WTC11 (cell line): ENCODE measurements at regions of chr16 and their contacts with region 1.

Region 1: GRCh38 chr16:81204798-81205680 is 33.5 kb upstream of the BCO1 start:
- DNase-seq: no peak
- ATAC-seq: no peak; the same call in 1 of the 2 replicates
- H3K4me3 Mint-ChIP-seq: no peak overlapping the region
- H3K27ac Mint-ChIP-seq: no peak overlapping the region
- H3K4me1 Mint-ChIP-seq: no peaks in the 10 kb centered on the region
- H3K27me3 Mint-ChIP-seq: no peaks in the 10 kb centered on the region
- CTCF ChIP-seq: peak; percentile 41

Region 2: GRCh38 chr16:81163671-81164070 is 41.4 kb before region 1 on chr16:
- CTCF ChIA-PET with region 1: no interaction called
- POLR2A ChIA-PET with region 1: no interaction called
- DNase-seq: no peak
- ATAC-seq: no peak
- H3K4me3 Mint-ChIP-seq: no peak overlapping the region
- H3K27ac Mint-ChIP-seq: no peak overlapping the region
- H3K4me1 Mint-ChIP-seq: no peaks in the 10 kb centered on the region
- H3K27me3 Mint-ChIP-seq: no peaks in the 10 kb centered on the region
- CTCF ChIP-seq: no peak

Region 3: DNA sequence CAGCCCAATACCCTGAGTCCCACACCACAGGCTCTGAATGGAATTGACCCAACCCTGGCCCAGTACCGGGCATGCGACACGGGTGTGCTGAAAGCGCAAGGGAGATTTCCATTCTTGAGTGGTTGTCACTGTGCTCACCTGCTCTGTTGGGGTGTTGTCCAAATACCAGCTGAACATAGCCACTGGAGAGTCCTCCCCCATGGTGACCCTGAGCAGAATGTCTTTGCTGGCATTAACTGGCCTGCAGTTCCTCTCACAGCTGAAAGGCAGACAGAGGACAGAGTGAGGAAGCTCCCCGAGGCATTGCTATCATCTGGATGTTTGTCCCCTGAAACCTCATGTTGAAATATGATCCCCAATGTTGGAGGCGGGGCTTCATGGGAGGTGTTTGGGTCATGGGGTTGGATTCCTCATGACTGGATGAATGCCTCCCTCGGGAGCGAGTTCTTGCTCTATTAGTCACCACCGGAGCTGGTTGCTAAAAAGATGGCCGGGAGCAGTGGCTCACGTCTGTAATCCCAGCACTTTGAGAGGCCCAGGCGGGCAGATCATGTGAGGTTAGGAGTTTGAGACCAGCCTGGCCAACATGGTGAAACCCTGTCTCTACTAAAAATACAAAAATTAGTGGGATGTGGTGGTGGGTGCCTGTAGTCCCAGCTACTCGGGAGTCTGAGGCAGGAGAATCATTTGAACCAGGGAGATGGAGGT is 23.9 kb before region 1 on chr16:
- CTCF ChIA-PET with region 1: interaction called, 17 read pairs
- POLR2A ChIA-PET with region 1: interaction called, 3 read pairs
- DNase-seq: peak; percentile 88
- ATAC-seq: peak; percentile 95
- H3K4me3 Mint-ChIP-seq: peak overlapping the region; percentile 65
- H3K27ac Mint-ChIP-seq: peak overlapping the region; percentile 96
- H3K4me1 Mint-ChIP-seq: peaks cover 20% of the 10 kb centered on the region
- H3K27me3 Mint-ChIP-seq: no peaks in the 10 kb centered on the region
- CTCF ChIP-seq: no peak

Region 4: GRCh38 chr16:81220349-81220748 is 15.3 kb after region 1 on chr16:
- CTCF ChIA-PET with region 1: interaction called, 19 read pairs
- POLR2A ChIA-PET with region 1: no interaction called
- DNase-seq: no peak
- ATAC-seq: no peak
- H3K4me3 Mint-ChIP-seq: no peak overlapping the region
- H3K27ac Mint-ChIP-seq: no peak overlapping the region
- H3K4me1 Mint-ChIP-seq: no peaks in the 10 kb centered on the region
- H3K27me3 Mint-ChIP-seq: no peaks in the 10 kb centered on the region
- CTCF ChIP-seq: no peak

Region 5: GRCh38 chr16:81238296-81239011 is 33.4 kb after region 1 on chr16 and contains the start of gene BCO1:
- CTCF ChIA-PET with region 1: interaction called, 11 read pairs
- POLR2A ChIA-PET with region 1: no interaction called
- DNase-seq: peak; percentile 19
- ATAC-seq: peak; percentile 62
- H3K4me3 Mint-ChIP-seq: peak within 1 kb of the TSS; percentile 65
- H3K27ac Mint-ChIP-seq: peak within 1 kb of the TSS; percentile 98
- H3K4me1 Mint-ChIP-seq: peaks cover 25% of the 10 kb centered on the region
- H3K27me3 Mint-ChIP-seq: no peaks in the 10 kb centered on the region
- CTCF ChIP-seq: no peak
- total RNA-seq, gene BCO1: 0.15 to 0.23 TPM (median 0.23 TPM) in 3 replicates

Region 6: DNA sequence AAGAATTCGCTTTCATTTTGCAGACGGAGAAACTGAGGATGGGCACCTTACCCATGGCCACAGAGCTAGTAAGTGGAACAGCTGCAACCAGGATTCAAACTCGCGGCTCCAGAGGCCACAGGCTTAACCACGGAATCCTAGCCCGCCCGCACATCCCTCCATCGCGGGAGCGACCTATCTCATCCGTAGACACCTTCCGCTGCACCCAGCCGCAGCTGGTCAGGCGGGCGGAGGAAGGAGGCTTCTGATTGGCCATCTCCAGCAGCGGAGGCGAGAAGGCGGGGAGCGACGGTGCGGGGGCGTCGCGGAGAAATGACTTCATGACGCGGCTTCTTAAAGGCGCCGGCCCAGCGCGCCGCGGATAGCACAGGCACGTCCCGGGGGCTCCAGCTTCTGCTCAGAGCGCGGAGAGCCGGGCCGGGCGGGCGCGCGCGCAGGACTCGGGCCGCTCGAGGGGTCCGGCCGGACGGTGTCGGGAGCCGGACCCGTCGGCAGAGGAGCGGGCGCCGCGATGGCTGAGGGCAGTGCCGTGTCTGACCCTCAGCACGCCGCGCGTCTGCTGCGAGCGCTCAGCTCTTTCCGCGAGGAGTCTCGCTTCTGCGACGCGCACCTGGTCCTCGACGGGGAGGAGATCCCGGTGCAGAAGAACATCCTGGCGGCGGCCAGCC is 109.7 kb after region 1 on chr16 and contains the start of gene GAN:
- CTCF ChIA-PET with region 1: interaction called, 10 read pairs
- POLR2A ChIA-PET with region 1: no interaction called
- DNase-seq: peak; percentile 96
- ATAC-seq: peak; percentile 91
- H3K4me3 Mint-ChIP-seq: peak within 1 kb of the TSS; percentile 98
- H3K27ac Mint-ChIP-seq: peak within 1 kb of the TSS; percentile 96
- H3K4me1 Mint-ChIP-seq: peaks cover 41% of the 10 kb centered on the region
- H3K27me3 Mint-ChIP-seq: peaks cover 4% of the 10 kb centered on the region; the same call in 1 of the 2 replicates
- CTCF ChIP-seq: no peak
- total RNA-seq, gene GAN: 20.1 to 25.4 TPM (median 21.8 TPM) in 3 replicates